ENCODE measurements at regions of chr3 and their contacts with region 1.

Region 1: GRCh38 chr3:152444029-152444641 is 175.4 kb downstream of the MBNL1 start:
- DNase-seq: peak; percentile 67
- ATAC-seq: peak; percentile 62
- H3K4me3 ChIP-seq: no peak overlapping the region
- H3K4me3 Mint-ChIP-seq: no peak overlapping the region
- H3K27ac ChIP-seq: peak overlapping the region in 1 of 2 donors; percentile 63
- H3K27ac Mint-ChIP-seq: peak overlapping the region; percentile 0
- H3K4me1 ChIP-seq: peaks cover 5 to 16% of the 10 kb centered on the region in 2 donors
- H3K4me1 Mint-ChIP-seq: peaks cover 55% of the 10 kb centered on the region
- H3K27me3 ChIP-seq: no peaks in the 10 kb centered on the region
- H3K27me3 Mint-ChIP-seq: no peaks in the 10 kb centered on the region
- CTCF ChIP-seq: peak; percentile 79

Region 2: GRCh38 chr3:152026033-152026556 is 418.0 kb before region 1 on chr3:
- CTCF ChIA-PET with region 1: interaction called, 8 read pairs
- POLR2A ChIA-PET with region 1: no interaction called
- intact Hi-C with region 1: loop called (anchors 5 kb)
- DNase-seq: peak; percentile 5
- ATAC-seq: no peak
- H3K4me3 ChIP-seq: no peak overlapping the region
- H3K4me3 Mint-ChIP-seq: no peak overlapping the region
- H3K27ac ChIP-seq: no peak overlapping the region
- H3K27ac Mint-ChIP-seq: no peak overlapping the region
- H3K4me1 ChIP-seq: no peaks in the 10 kb centered on the region
- H3K4me1 Mint-ChIP-seq: no peaks in the 10 kb centered on the region
- H3K27me3 ChIP-seq: peaks cover 0 to under 1% (median 0%) of the 10 kb centered on the region in 4 experiments
- H3K27me3 Mint-ChIP-seq: peaks cover 3% of the 10 kb centered on the region
- CTCF ChIP-seq: no peak

Region 3: GRCh38 chr3:152177757-152178156 is 266.4 kb before region 1 on chr3:
- CTCF ChIA-PET with region 1: interaction called, 222 read pairs
- POLR2A ChIA-PET with region 1: no interaction called
- intact Hi-C with region 1: no loop called
- DNase-seq: no peak
- ATAC-seq: no peak
- H3K4me3 ChIP-seq: no peak overlapping the region
- H3K4me3 Mint-ChIP-seq: no peak overlapping the region
- H3K27ac ChIP-seq: no peak overlapping the region
- H3K27ac Mint-ChIP-seq: no peak overlapping the region
- H3K4me1 ChIP-seq: no peaks in the 10 kb centered on the region
- H3K4me1 Mint-ChIP-seq: peaks cover 2% of the 10 kb centered on the region
- H3K27me3 ChIP-seq: no peaks in the 10 kb centered on the region
- H3K27me3 Mint-ChIP-seq: no peaks in the 10 kb centered on the region
- CTCF ChIP-seq: no peak

Region 4: DNA sequence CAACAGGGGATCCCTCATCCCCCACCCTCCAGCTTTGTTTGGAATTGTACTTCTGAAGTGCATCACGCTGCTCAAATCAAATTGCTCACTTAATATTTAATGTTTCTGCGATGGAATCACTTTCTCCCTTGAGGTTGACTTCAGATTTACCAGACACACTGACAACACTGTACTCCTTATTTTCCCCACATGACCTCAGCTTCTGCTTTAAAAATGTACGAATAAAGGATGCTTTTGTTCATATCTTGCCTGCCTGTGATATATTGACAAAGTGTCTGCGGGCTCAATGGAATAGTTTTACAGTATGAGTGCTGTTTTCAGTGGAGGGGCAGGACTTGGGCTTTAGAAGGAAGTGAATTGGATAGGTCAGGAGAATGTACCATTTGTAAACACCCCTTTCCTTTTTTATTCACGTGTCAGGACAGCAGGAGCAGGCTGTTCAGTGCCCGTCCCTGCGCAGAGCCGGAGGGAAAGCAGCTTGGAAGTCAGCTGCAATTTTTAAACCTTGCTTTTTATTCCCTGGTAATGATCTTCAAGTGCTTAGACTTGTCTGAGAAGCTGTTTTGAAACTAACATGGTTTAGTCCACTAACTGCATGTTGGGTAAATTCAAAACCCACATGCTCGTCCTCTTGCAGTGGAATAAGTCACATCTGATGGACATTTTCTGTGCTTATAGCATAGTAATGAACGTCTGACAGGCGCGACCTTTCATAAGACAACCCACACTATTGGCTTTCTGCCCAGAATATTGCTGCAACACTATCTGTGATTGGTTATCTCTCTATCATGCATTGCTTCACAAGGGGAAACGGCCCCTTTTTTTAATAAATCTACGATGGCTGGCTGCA is 145.5 kb before region 1 on chr3:
- CTCF ChIA-PET with region 1: interaction called, 4 read pairs
- POLR2A ChIA-PET with region 1: no interaction called
- intact Hi-C with region 1: loop called (anchors 5 kb)
- DNase-seq: peak; percentile 77
- ATAC-seq: peak; percentile 76
- H3K4me3 ChIP-seq: peak overlapping the region in 1 of 5 experiments; percentile 47
- H3K4me3 Mint-ChIP-seq: peak overlapping the region; percentile 79
- H3K27ac ChIP-seq: peak overlapping the region; percentile 16 to 61
- H3K27ac Mint-ChIP-seq: peak overlapping the region; percentile 86
- H3K4me1 ChIP-seq: peaks cover 47 to 75% of the 10 kb centered on the region in 2 donors
- H3K4me1 Mint-ChIP-seq: peaks cover 73% of the 10 kb centered on the region
- H3K27me3 ChIP-seq: no peaks in the 10 kb centered on the region
- H3K27me3 Mint-ChIP-seq: no peaks in the 10 kb centered on the region
- CTCF ChIP-seq: no peak

Region 5: GRCh38 chr3:152466784-152467183 is 22.6 kb after region 1 on chr3:
- CTCF ChIA-PET with region 1: interaction called, 19 read pairs
- POLR2A ChIA-PET with region 1: no interaction called
- intact Hi-C with region 1: no loop called
- DNase-seq: peak; percentile 55
- ATAC-seq: peak; percentile 71
- H3K4me3 ChIP-seq: no peak overlapping the region
- H3K4me3 Mint-ChIP-seq: no peak overlapping the region
- H3K27ac ChIP-seq: peak overlapping the region in 1 of 2 donors; percentile 32
- H3K27ac Mint-ChIP-seq: peak overlapping the region; percentile 59
- H3K4me1 ChIP-seq: peaks cover 3 to 10% of the 10 kb centered on the region in 2 donors
- H3K4me1 Mint-ChIP-seq: peaks cover 20% of the 10 kb centered on the region
- H3K27me3 ChIP-seq: no peaks in the 10 kb centered on the region
- H3K27me3 Mint-ChIP-seq: no peaks in the 10 kb centered on the region
- CTCF ChIP-seq: peak; percentile 78